Gastrocnemius medialis (tissue), 4 donors: ENCODE measurements at regions of chr2 and their contacts with region 1.

Region 1: GRCh38 chr2:221969087-221969829 is 329.5 kb downstream of the PAX3 start:
- DNase-seq: no peak
- ATAC-seq: peak in 1 of 2 donors; percentile 56
- H3K4me3 ChIP-seq: no peak overlapping the region
- H3K27ac ChIP-seq: no peak overlapping the region
- H3K4me1 ChIP-seq: no peaks in the 10 kb centered on the region
- H3K27me3 ChIP-seq: no peaks in the 10 kb centered on the region
- CTCF ChIP-seq: peak in 4 of 5 experiments; percentile 20 to 47 (median 39)
- POLR2A ChIP-seq: no peak

Region 2: DNA sequence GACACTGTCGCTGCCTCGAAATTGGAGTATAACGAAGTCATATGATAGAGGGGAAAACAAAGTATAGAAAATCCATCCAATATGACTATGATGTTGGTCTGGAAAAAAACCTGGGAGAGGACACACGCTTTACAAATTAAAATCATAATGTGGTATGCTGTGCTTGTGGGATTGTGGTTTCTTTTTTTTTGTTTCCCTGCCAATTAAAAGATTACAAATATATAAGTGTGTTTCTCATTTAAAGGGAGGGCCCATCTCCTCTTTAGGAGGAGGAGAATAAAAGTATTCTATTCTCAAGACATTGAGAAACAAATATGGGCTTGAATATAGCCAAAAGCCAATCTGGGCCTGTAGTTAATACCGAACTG is 483.8 kb before region 1 on chr2:
- in situ Hi-C with region 1: no loop called
- intact Hi-C with region 1: loop called (anchors 5 kb)
- DNase-seq: no peak
- ATAC-seq: no peak
- H3K4me3 ChIP-seq: no peak overlapping the region
- H3K27ac ChIP-seq: no peak overlapping the region
- H3K4me1 ChIP-seq: peaks cover 0 to 11% of the 10 kb centered on the region in 2 donors
- H3K27me3 ChIP-seq: no peaks in the 10 kb centered on the region
- CTCF ChIP-seq: no peak
- POLR2A ChIP-seq: no peak

Region 3: DNA sequence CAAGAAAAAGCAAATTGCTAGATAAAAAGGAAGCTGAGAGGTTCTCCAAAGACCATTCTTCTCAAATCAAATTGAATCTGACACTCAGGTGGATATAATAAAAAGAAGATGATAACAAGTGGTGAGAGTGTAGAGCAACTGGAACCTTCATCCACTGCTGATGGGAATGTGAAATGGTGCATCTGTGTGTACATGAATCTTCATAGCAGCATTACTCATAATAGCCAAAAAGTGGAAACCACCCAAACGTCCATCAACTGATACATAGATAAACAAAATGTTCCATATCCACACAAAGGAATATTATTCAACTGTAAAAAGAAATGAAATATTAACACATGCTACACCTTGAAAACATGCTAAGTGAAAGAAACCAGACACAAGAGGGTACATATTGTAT is 40.0 kb before region 1 on chr2:
- in situ Hi-C with region 1: no loop called
- intact Hi-C with region 1: no loop called
- DNase-seq: no peak
- ATAC-seq: no peak
- H3K4me3 ChIP-seq: no peak overlapping the region
- H3K27ac ChIP-seq: no peak overlapping the region
- H3K4me1 ChIP-seq: no peaks in the 10 kb centered on the region
- H3K27me3 ChIP-seq: no peaks in the 10 kb centered on the region
- CTCF ChIP-seq: no peak
- POLR2A ChIP-seq: no peak